AG04449 (cell line): ENCODE measurements at regions of chr3 and their contacts with region 1.

Region 1: GRCh38 chr3:187164885-187165543 is 25.7 kb upstream of the RPL39L start:
- DNase-seq: no peak
- H3K4me3 ChIP-seq: no peak overlapping the region
- CTCF ChIP-seq: peak; percentile 49

Region 2: GRCh38 chr3:186849374-186849975 is 315.5 kb before region 1 on chr3:
- CTCF ChIA-PET with region 1: interaction called, 141 read pairs
- POLR2A ChIA-PET with region 1: no interaction called
- DNase-seq: no peak
- H3K4me3 ChIP-seq: no peak overlapping the region
- CTCF ChIP-seq: peak; percentile 1

Region 3: DNA sequence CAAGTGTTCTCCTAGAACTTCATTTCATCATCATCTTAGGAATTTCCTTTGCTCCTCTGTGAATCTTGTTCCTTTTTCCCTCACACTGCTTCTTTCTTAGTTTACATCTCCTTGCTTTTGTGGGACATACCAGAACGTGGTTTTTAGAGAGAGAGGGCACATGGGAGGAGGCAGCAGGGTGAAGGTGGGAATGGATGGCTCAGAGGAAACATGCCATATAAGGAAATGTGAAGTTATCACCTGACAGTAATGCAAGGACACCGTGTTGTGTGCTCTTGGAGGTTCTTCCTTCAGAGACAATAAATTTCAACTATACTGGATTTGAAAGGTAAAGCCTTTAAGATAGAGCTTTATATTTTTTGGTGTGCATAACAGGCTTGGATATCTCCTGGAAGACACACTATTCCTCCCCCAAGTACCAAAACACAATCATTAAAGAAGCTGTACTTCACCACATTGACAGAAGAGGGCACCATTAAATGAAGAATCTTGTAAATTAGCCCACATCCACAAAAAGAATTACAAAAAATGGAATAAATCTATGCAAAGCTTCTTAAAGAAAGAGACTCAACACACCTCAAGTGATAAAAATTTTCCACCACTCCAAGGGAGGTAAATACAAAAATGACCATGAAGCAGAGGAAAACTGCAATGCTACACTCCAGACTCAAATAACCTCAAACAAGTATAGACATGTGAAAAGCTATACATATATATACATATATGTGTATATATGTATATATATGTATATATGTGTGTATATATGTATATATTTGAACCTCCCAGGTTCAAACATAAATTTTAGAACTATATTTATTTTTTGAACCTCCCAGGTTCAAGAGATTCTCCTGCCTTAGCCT is 51.9 kb before region 1 on chr3:
- CTCF ChIA-PET with region 1: interaction called, 129 read pairs
- POLR2A ChIA-PET with region 1: no interaction called
- DNase-seq: no peak
- H3K4me3 ChIP-seq: no peak overlapping the region
- CTCF ChIP-seq: peak; percentile 39

Region 4: GRCh38 chr3:187139126-187139894 is 25.7 kb before region 1 on chr3 and contains the start of gene RPL39L:
- CTCF ChIA-PET with region 1: interaction called, 139 read pairs
- POLR2A ChIA-PET with region 1: no interaction called
- DNase-seq: peak; percentile 21
- H3K4me3 ChIP-seq: peak within 1 kb of the TSS; percentile 81
- CTCF ChIP-seq: peak; percentile 97

Region 5: DNA sequence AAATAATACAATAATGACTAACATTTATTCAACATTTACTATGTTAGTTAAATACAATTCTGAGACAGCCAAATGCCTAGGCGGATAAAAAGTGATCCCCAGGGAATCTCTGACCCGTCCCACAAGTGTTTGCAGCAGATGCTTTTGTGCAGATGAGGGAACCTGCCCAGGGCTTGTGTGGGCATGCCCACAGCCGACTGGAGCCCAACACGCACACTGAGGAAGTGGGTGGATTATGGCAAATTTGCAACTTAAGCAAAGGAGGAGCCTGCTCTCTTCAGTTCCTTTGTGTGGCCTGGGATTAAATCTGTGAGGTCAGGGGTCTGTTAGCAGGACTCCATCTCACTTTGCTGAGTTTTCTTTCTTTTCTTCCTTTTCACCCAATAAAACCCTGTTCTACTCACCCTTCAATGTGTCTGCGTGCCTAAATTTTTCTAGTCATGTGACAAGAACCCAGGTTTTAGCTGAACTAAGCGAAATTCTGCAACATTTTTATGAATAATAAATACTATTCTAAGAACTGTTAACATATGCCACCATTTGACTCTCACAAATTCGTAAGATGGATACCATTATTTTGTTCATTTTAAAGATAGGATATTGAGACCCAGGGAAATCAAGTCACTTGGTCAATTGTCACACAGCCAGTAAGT is 18.3 kb after region 1 on chr3:
- CTCF ChIA-PET with region 1: interaction called, 13 read pairs
- POLR2A ChIA-PET with region 1: no interaction called
- DNase-seq: no peak
- H3K4me3 ChIP-seq: no peak overlapping the region
- CTCF ChIP-seq: no peak